ENCODE measurements at regions of chr21 and their contacts with region 1.

Region 1: DNA sequence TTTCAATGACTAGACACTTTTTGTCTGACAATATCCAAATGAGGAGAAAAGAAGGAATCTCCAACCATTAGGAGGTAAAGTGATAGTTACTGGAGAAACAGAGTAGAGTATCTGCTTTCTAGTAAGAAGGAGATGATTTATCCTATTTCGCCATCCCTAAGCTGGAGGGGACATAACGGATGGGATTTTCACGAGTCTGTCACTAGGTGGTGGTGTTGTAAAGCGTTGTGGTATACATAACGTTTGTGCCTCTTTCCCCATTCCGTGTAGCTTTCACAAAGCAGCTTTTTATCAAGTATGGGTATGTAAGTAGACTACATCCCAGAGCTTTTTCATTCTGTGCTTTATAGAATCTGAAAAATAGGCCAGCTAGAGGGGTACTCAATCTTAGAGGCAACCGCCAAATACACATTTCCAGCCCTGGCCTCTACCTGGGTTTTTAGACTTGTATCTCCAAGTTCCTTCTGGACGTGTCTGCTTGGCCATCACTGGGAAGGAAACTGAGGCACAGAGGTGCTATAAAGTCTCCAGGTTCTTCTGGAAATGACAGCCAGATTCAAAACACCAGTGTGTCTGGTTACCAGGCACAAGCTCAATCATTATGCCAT is 33.3 kb upstream of the FAM3B start:
- DNase-seq: peak in 31 of 42 donors; percentile 8 to 78 (median 52)

Region 2: GRCh38 chr21:41170859-41171555 is 112.3 kb before region 1 on chr21:
- intact Hi-C with region 1: no loop called
- DNase-seq: peak in 12 of 42 donors; percentile 13 to 57 (median 32)

Region 3: GRCh38 chr21:41460578-41461527 is 177.5 kb after region 1 on chr21:
- intact Hi-C with region 1: loop called (anchors 10 kb)
- DNase-seq: peak; percentile 46 to 85 (median 66)